H1 (cell line): ENCODE measurements at regions of chr1 and their contacts with region 1.

Region 1: DNA sequence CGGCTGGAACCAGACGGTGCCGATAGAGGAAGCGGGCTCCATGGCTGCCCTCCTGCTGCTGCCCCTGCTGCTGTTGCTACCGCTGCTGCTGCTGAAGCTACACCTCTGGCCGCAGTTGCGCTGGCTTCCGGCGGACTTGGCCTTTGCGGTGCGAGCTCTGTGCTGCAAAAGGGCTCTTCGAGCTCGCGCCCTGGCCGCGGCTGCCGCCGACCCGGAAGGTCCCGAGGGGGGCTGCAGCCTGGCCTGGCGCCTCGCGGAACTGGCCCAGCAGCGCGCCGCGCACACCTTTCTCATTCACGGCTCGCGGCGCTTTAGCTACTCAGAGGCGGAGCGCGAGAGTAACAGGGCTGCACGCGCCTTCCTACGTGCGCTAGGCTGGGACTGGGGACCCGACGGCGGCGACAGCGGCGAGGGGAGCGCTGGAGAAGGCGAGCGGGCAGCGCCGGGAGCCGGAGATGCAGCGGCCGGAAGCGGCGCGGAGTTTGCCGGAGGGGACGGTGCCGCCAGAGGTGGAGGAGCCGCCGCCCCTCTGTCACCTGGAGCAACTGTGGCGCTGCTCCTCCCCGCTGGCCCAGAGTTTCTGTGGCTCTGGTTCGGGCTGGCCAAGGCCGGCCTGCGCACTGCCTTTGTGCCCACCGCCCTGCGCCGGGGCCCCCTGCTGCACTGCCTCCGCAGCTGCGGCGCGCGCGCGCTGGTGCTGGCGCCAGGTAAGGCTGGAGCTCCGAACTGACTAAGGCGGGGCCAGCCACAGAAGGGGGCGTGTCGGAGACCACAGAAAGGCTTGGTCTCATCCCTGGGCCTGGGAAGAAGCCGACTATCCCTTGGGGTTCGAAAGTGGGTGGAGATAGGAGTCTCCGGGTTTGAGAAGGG is 486 bp downstream of the SLC27A3 start:
- DNase-seq: peak; percentile 70 to 92
- H3K4me3 ChIP-seq: peak overlapping the region; percentile 66 to 86 (median 83)
- H3K27ac ChIP-seq: peak overlapping the region; percentile 82
- H3K4me1 ChIP-seq: peaks cover 0 to 17% (median 11%) of the 10 kb centered on the region in 4 experiments; a peak in 6 of 7 replicates
- H3K27me3 ChIP-seq: no peaks in the 10 kb centered on the region; a peak in 1 of 7 replicates
- CTCF ChIP-seq: no peak; a peak in 1 of 4 replicates
- EP300 ChIP-seq: 0 out of 3 replicates have a peak, but pooled peaks of 1 of the 2 experiments have one; percentile 51
- POLR2A ChIP-seq: peak; percentile 70 to 93
- RAD21 ChIP-seq: peak in 1 of 2 experiments; percentile 2; a peak in 1 of 4 replicates

Region 2: GRCh38 chr1:153763365-153764225 is 12.1 kb before region 1 on chr1:
- CTCF ChIA-PET with region 1: interaction called, 20 read pairs
- POLR2A ChIA-PET with region 1: interaction called, 12 read pairs
- DNase-seq: no peak
- H3K4me3 ChIP-seq: no peak overlapping the region
- H3K27ac ChIP-seq: no peak overlapping the region
- H3K4me1 ChIP-seq: no peaks in the 10 kb centered on the region
- H3K27me3 ChIP-seq: no peaks in the 10 kb centered on the region
- CTCF ChIP-seq: no peak
- EP300 ChIP-seq: no peak
- POLR2A ChIP-seq: no peak
- RAD21 ChIP-seq: no peak